WTC11 (cell line): ENCODE measurements at regions of chr11 and their contacts with region 1.

Region 1: DNA sequence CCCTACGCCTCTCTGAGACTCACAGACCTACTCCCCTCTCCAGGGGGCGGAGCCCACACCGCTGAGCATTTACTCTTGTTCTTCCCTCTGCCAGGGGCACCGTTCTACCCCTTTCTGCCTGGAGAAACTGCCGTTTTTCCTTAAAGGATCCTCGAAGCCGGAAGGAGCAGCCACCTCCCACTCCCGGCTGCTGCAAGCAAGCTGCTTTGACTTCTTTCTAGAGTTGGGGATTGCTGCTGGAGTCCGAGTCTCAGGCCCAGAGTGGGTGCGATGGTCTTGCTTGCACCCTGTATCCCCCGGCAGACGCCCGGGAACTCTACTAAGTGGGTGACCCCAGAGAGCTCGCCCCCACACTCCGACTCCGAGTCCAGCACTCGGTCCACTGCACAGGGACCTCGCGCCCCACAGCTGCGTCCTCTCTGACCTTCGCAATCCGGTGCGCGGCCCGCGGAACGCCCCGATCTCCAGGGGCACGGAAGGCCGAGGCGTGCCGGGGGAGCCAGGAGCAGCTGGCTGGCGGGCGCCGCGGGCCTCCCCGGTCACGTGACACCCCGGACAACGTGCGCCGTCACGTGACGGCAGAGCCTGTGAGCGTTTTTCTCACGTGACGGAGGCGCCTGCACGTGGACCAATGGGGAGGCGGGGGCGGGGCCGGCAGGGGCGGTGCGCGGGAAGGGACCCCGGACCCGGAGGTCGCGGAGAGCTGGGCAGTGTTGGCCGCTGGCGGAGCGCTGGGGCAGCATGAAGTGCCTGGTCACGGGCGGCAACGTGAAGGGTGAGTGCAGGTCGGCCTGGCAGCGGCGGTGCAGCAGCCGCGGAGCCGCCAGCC is at the start of gene RAD9A:
- DNase-seq: peak; percentile 93
- ATAC-seq: peak; percentile 52
- H3K4me3 Mint-ChIP-seq: peak within 1 kb of the TSS; percentile 75
- H3K27ac Mint-ChIP-seq: peak within 1 kb of the TSS; percentile 85
- H3K4me1 Mint-ChIP-seq: peaks cover 35% of the 10 kb centered on the region
- H3K27me3 Mint-ChIP-seq: no peaks in the 10 kb centered on the region
- CTCF ChIP-seq: no peak
- total RNA-seq, gene RAD9A: 25.7 to 45.5 TPM (median 26.7 TPM) in 3 replicates

Region 2: GRCh38 chr11:67252831-67253239 is 138.7 kb before region 1 on chr11:
- CTCF ChIA-PET with region 1: no interaction called
- POLR2A ChIA-PET with region 1: no interaction called
- DNase-seq: no peak
- ATAC-seq: peak; percentile 74
- H3K4me3 Mint-ChIP-seq: no peak overlapping the region
- H3K27ac Mint-ChIP-seq: no peak overlapping the region
- H3K4me1 Mint-ChIP-seq: no peaks in the 10 kb centered on the region
- H3K27me3 Mint-ChIP-seq: no peaks in the 10 kb centered on the region
- CTCF ChIP-seq: no peak

Region 3: DNA sequence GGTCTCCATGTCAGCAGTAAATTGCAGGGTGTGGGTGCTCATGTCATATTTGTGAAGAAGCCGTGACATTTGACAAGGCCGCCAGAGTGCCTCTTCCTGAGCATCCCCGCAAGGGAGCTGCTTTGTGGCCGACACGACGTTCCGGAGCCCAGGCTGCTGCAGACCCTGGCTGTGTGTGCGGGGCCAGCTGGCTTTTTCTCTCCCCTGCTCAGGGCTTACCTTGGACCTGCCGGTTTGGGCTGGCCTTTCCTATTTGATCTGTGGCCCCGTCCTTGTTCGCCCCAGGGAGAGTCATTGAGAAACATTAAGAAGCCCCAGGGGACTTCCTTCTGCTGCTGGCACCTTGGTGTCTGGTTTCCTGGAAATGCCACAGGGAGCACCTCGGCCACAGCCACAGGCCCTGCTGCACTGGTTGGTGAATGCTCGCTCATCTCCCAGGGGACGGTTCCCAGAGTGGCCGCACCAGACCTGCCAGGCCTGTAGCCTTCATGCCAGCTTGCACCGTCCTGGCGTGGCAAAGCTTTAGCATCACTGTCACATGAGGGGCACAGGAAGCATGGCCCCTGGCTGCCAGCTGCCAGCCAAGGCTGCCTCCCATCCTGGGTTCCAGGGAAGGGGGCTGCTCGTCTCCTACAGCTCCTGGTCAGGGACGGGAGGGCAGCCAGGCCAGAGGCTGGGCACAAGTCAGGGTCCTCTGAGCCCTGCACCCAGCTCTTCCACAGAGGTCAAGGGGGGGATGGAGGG is 119.8 kb before region 1 on chr11:
- CTCF ChIA-PET with region 1: no interaction called
- POLR2A ChIA-PET with region 1: no interaction called
- DNase-seq: peak; percentile 28
- ATAC-seq: 0 out of 2 replicates have a peak, but pooled peaks have one; percentile 4
- H3K4me3 Mint-ChIP-seq: peak overlapping the region; percentile 53; the same call in 1 of the 2 replicates
- H3K27ac Mint-ChIP-seq: peak overlapping the region; percentile 94; the same call in 1 of the 2 replicates
- H3K4me1 Mint-ChIP-seq: peaks cover 57% of the 10 kb centered on the region
- H3K27me3 Mint-ChIP-seq: no peaks in the 10 kb centered on the region; the same call in 1 of the 2 replicates
- CTCF ChIP-seq: no peak

Region 4: DNA sequence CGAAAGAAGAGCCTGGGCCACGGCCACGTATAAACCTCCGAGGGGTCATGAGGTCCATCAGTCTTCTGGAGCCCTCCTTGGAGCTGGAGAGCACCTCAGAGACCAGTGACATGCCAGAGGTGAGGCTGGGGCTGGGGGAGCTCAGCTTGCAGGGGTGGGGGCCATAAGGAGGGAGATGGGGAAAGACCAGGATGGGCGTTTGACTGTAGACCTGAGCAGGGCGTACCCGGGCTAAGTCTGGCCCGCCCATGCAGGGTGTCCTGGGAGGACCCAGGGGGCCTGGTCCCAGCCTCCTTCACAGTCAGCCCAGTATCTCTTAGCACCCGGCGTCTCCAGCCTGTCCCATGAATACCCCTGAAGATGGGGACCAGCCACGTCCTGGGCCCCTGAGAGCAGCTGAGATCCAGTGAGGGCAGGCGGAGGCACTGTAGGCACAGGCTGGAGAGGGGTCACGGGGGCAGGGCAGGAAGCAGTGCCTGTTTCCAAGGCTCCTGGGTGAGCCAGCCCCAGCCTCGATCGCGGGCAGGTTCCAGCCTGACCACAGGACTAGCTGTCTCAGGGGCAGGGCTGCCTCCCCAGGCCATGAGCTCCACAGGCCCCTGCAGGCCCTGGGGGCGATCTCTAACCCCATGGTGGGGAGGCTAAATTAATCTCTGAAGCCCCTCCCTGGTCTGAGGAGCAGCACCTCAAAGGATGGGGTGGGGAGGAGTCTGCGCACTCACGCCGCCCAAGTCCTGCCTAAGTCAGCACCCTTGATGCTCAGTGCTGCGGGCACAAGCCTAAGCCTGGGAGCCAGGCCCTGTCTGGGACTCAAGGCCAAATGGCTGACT is 81.1 kb before region 1 on chr11:
- CTCF ChIA-PET with region 1: no interaction called
- POLR2A ChIA-PET with region 1: no interaction called
- DNase-seq: no peak
- ATAC-seq: no peak
- H3K4me3 Mint-ChIP-seq: no peak overlapping the region
- H3K27ac Mint-ChIP-seq: no peak overlapping the region
- H3K4me1 Mint-ChIP-seq: no peaks in the 10 kb centered on the region
- H3K27me3 Mint-ChIP-seq: peaks cover 9% of the 10 kb centered on the region
- CTCF ChIP-seq: no peak

Region 5: DNA sequence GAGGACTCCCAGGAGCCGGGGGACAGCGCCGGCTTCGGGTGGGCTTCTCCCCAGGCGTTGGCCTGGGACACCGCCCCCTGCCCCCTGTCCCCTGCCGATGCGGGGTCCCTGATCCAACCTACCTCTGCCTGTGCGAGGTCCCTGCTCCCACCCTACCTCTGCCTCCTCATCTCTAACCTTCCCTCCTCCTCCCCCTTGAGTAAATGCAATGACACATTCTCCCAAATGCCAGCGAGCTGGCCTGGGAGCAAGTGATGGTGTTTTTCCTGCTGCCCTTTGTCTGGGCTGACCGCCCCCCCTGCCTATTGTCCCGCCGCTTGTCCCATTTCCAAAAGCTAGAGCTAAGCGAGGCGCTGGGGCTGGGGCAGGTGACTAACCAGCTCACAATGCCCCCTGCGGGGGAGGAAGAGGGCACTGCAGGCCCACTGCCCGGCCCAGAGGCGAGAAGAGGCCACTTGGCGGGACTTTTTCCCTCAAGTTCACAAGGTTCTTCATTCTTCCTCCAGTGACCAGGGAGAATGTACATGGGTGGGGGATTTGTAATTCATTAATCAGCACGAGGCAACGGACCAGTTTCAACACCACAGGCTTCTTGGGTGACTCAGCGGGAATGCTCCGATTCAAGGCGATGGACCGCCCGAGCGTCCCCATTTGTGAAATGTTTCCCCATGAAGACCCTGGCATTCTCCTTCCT is 17.4 kb before region 1 on chr11:
- CTCF ChIA-PET with region 1: interaction called, 14 read pairs
- POLR2A ChIA-PET with region 1: interaction called, 6 read pairs
- DNase-seq: peak; percentile 77
- ATAC-seq: peak; percentile 6
- H3K4me3 Mint-ChIP-seq: peak overlapping the region; percentile 88
- H3K27ac Mint-ChIP-seq: no peak overlapping the region
- H3K4me1 Mint-ChIP-seq: peaks cover 46% of the 10 kb centered on the region
- H3K27me3 Mint-ChIP-seq: peaks cover 82% of the 10 kb centered on the region
- CTCF ChIP-seq: peak; percentile 32; the same call in 1 of the 2 replicates

Region 6: DNA sequence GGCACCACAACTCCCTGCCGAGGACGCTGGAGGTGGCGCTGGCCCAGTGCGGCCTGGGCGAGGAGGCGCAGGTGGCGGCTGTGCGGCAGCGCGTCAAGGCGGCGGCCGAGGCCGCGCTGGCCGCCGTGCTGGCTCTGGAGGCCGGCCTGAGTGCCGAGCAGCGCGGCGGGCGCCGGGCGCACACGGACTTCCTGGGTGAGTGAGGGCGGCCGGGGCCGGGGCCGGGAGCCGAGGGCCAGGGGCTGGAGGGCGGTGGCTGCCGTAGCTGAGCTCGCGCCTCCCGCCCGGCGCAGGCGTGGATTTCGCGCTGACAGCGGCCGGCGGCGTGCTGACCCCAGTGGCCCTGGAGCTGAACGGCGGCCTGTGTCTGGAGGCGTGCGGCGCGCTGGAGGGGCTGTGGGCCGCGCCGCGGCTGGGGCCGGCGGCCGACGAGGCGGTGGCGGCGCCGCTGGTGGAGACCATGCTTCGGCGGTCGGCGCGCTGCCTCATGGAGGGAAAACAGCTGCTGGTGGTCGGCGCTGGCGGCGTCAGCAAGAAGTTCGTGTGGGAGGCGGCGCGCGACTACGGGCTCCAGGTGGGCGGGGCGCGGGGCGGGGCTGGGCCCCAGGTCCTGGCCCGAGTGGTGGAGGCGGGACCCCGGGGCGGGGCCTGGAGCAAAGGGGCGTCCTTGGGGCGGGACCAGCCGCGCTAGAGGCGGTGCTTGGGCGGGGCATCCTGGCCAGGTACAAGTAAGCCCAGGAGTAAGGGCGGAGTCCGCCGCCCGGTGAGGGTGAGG is 29.3 kb after region 1 on chr11:
- CTCF ChIA-PET with region 1: interaction called, 10 read pairs
- POLR2A ChIA-PET with region 1: interaction called, 5 read pairs
- DNase-seq: peak; percentile 99
- ATAC-seq: peak; percentile 96
- H3K4me3 Mint-ChIP-seq: peak overlapping the region; percentile 63
- H3K27ac Mint-ChIP-seq: peak overlapping the region; percentile 77
- H3K4me1 Mint-ChIP-seq: peaks cover 19% of the 10 kb centered on the region
- H3K27me3 Mint-ChIP-seq: peaks cover 6% of the 10 kb centered on the region; the same call in 1 of the 2 replicates
- CTCF ChIP-seq: no peak